CD4-positive, alpha-beta memory T cell (primary cell): ENCODE measurements at regions of chr14 and their contacts with region 1.

Region 1: DNA sequence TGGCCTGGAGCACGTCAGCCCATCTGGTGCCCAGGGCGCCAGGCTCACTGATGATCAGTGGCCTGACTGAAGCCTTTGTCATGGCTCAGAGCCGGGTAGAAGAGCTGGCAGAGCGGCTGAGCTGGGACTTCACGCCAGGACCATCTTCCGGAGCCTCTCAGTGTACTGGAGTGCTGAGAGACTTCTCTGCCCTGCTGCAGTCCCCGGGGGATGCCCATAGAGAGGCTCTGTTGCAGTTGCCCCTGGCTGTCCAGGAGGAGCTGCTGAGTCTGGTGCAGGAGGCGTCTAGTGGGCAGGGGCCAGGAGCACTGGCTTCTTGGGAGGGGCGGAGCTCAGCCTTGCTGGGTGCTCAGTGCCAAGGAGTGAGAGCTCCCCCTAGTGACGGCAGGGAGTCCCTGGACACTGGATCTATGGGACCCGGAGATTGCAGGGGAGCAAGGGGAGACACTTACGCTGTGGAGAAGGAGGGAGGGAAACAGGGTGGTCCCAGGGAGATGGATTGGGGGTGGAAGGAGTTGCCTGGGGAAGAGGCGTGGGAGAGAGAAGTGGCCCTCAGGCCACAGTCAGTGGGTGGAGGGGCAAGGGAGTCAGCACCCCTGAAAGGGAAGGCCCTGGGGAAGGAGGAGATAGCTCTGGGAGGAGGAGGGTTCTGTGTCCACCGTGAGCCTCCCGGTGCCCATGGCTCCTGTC is 2.0 kb downstream of the KHNYN start:
- DNase-seq: peak; percentile 85 to 87 (median 85)
- H3K4me3 ChIP-seq: peak overlapping the region in 1 of 2 donors; percentile 87
- H3K4me3 Mint-ChIP-seq: peak overlapping the region; percentile 90 to 95 (median 92)
- H3K27ac ChIP-seq: peak overlapping the region; percentile 93
- H3K27ac Mint-ChIP-seq: peak overlapping the region; percentile 84 to 98 (median 96)
- H3K4me1 ChIP-seq: peaks cover 61% of the 10 kb centered on the region
- H3K4me1 Mint-ChIP-seq: peaks cover 27 to 66% (median 45%) of the 10 kb centered on the region in 4 donors
- H3K27me3 ChIP-seq: no peaks in the 10 kb centered on the region
- H3K27me3 Mint-ChIP-seq: no peaks in the 10 kb centered on the region

Region 2: GRCh38 chr14:23567192-23568020 is 864.3 kb before region 1 on chr14 and contains the start of gene AP1G2:
- CTCF ChIA-PET with region 1: no interaction called
- POLR2A ChIA-PET with region 1: no interaction called
- intact Hi-C with region 1: loop called (anchors 5 kb)
- DNase-seq: peak; percentile 85 to 88 (median 86)
- H3K4me3 ChIP-seq: peak within 1 kb of the TSS; percentile 79 to 94
- H3K4me3 Mint-ChIP-seq: peak within 1 kb of the TSS; percentile 97 to 100 (median 100)
- H3K27ac ChIP-seq: peak within 1 kb of the TSS; percentile 74
- H3K27ac Mint-ChIP-seq: peak within 1 kb of the TSS; percentile 95 to 100 (median 98)
- H3K4me1 ChIP-seq: peaks cover 22% of the 10 kb centered on the region
- H3K4me1 Mint-ChIP-seq: peaks cover 22 to 55% (median 37%) of the 10 kb centered on the region in 4 donors
- H3K27me3 ChIP-seq: no peaks in the 10 kb centered on the region
- H3K27me3 Mint-ChIP-seq: peaks cover 1 to 2% of the 10 kb centered on the region in 2 donors
- total RNA-seq, gene AP1G2: 492 to 498 TPM

Region 3: DNA sequence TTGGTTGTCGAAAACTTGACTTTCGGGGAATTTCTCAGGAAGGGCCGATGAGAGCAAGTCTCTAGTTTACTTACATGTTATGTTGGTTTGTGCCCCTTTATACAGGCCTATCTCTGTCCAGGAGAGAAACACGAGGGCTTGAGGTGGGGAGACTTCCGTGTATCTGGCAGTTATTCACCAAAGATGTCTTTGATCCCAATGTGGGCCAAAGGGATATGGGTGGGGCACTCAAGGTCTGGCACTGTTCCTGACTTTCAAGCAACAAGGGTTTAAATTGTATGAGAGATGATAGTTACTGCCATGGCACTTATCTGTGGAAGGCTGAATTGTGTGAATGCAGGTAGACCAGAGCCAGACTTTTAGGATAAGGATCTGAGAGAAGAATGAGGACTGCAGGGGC is 615.3 kb before region 1 on chr14:
- CTCF ChIA-PET with region 1: no interaction called
- POLR2A ChIA-PET with region 1: no interaction called
- intact Hi-C with region 1: no loop called
- DNase-seq: no peak
- H3K4me3 ChIP-seq: no peak overlapping the region
- H3K4me3 Mint-ChIP-seq: no peak overlapping the region
- H3K27ac ChIP-seq: no peak overlapping the region
- H3K27ac Mint-ChIP-seq: no peak overlapping the region
- H3K4me1 ChIP-seq: no peaks in the 10 kb centered on the region
- H3K4me1 Mint-ChIP-seq: no peaks in the 10 kb centered on the region
- H3K27me3 ChIP-seq: no peaks in the 10 kb centered on the region
- H3K27me3 Mint-ChIP-seq: peaks cover 0 to 2% of the 10 kb centered on the region in 2 donors

Region 4: GRCh38 chr14:24080888-24081738 is 350.6 kb before region 1 on chr14:
- CTCF ChIA-PET with region 1: no interaction called
- POLR2A ChIA-PET with region 1: interaction called, 4 read pairs
- intact Hi-C with region 1: loop called (anchors 1 kb)
- DNase-seq: peak; percentile 64 to 77 (median 67)
- H3K4me3 ChIP-seq: peak overlapping the region; percentile 39 to 60
- H3K4me3 Mint-ChIP-seq: peak overlapping the region; percentile 81 to 90 (median 87)
- H3K27ac ChIP-seq: peak overlapping the region; percentile 50
- H3K27ac Mint-ChIP-seq: peak overlapping the region; percentile 64 to 92 (median 88)
- H3K4me1 ChIP-seq: peaks cover 14% of the 10 kb centered on the region
- H3K4me1 Mint-ChIP-seq: peaks cover 10 to 27% (median 15%) of the 10 kb centered on the region in 4 donors
- H3K27me3 ChIP-seq: no peaks in the 10 kb centered on the region
- H3K27me3 Mint-ChIP-seq: no peaks in the 10 kb centered on the region

Region 5: GRCh38 chr14:24195191-24196070 is 236.3 kb before region 1 on chr14 and contains the start of gene TM9SF1:
- CTCF ChIA-PET with region 1: no interaction called
- POLR2A ChIA-PET with region 1: interaction called, 19 read pairs
- intact Hi-C with region 1: no loop called
- DNase-seq: peak; percentile 89 to 92 (median 92)
- H3K4me3 ChIP-seq: peak within 1 kb of the TSS; percentile 87 to 90
- H3K4me3 Mint-ChIP-seq: peak within 1 kb of the TSS; percentile 93 to 98 (median 94)
- H3K27ac ChIP-seq: peak within 1 kb of the TSS; percentile 98
- H3K27ac Mint-ChIP-seq: peak within 1 kb of the TSS; percentile 92 to 99 (median 98)
- H3K4me1 ChIP-seq: peaks cover 37% of the 10 kb centered on the region
- H3K4me1 Mint-ChIP-seq: peaks cover 31 to 65% (median 48%) of the 10 kb centered on the region in 4 donors
- H3K27me3 ChIP-seq: no peaks in the 10 kb centered on the region
- H3K27me3 Mint-ChIP-seq: no peaks in the 10 kb centered on the region
- total RNA-seq, gene TM9SF1: 24.1 to 26.3 TPM

Region 6: DNA sequence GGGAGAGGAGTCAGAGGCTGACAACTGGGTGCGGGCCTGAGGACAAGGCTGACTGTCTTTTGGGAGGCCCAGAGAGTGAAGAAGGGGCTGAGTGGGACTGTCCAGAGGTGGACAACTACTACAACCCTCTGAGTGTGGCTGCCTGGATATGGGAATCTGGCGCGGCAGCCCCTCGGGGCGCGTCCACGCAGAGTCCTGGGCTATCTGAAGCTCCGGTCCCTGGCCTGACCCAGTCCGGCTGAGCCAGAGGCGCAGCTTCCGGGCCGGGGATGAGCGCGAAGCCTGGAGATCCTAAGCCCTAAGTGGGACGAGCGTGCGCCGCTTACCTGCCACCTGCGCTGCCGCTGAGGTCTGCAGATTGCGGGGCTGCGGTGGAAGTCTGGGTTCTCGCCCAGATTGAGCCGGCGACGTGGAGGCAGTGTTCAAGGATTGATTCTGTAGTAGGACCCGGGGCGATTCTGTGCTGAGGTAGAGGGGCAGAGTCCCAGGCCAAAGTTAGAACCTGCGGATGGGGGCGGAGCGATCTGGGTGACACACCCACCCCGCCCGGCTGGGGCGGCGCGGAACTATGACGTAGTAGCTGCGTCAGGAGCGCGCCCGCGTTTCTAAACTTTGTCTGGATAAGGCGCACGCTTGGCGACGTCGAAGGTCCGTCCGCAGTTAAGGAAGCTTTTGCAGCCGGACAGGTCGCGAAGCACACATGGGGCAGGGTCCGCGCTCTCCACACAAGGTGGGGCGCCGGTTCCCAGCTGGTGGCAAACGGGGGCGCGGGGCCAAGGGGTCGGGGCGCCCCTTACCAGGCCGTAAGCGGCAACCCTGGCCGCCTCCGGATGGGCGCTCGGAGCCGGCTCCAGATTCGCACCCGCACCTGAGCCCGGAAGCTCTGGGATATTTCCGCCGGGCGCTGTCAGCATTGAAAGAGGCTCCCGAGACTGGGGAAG is 132.2 kb before region 1 on chr14 and contains the starts of genes DHRS1 and NOP9:
- CTCF ChIA-PET with region 1: interaction called, 29 read pairs
- POLR2A ChIA-PET with region 1: interaction called, 37 read pairs
- intact Hi-C with region 1: no loop called
- DNase-seq: peak; percentile 89 to 92 (median 90)
- H3K4me3 ChIP-seq: peak within 1 kb of the TSS; percentile 77 to 85
- H3K4me3 Mint-ChIP-seq: peak within 1 kb of the TSS; percentile 91 to 99 (median 94)
- H3K27ac ChIP-seq: peak within 1 kb of the TSS; percentile 87
- H3K27ac Mint-ChIP-seq: peak within 1 kb of the TSS; percentile 96 to 99 (median 98)
- H3K4me1 ChIP-seq: peaks cover 42% of the 10 kb centered on the region
- H3K4me1 Mint-ChIP-seq: peaks cover 32 to 66% (median 51%) of the 10 kb centered on the region in 4 donors
- H3K27me3 ChIP-seq: no peaks in the 10 kb centered on the region
- H3K27me3 Mint-ChIP-seq: no peaks in the 10 kb centered on the region
- total RNA-seq, gene DHRS1: 37.6 to 38.6 TPM
- total RNA-seq, gene NOP9: 23.1 to 28.1 TPM

Region 7: DNA sequence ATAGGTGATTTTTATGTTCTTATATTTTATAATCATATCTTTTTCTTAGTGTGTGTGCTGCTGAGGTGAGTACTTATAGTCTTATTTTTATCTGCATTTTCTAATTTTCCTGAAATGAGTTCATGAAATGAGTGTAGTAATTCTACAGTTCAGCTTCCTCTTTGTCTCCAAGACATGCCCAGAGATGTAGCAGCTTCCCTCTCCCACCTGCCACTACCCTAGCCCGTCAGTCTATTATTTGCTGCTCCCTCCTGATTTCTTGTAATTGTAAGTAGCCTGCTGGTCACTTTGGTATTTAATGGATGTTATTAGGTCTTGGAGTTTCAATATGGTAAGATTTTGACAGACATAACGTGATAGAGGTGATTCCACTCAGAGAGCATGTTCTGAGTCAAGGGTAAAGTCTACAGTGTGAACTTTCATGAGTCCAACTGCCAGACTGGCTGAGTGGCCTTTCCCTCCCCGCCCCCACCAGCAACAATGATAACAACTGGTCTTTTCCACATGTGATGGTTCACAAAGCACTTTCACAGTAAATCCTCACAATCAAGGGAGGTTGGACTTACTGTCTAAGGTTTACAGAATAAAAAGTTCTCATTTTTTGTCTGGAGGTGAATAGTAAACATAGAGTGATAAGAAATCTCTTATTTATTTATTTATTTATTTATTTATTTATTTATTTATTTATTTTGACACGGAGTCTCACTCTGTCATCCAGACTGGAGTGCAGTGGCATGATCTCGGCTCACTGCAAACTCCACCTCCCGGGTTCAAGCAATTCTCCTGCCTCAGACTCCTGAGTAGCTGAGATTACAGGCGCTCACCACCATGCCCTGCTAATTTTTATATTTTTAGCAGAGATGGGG is 87.7 kb before region 1 on chr14:
- CTCF ChIA-PET with region 1: interaction called, 791 read pairs
- POLR2A ChIA-PET with region 1: interaction called, 361 read pairs
- intact Hi-C with region 1: no loop called
- DNase-seq: no peak
- H3K4me3 ChIP-seq: no peak overlapping the region
- H3K4me3 Mint-ChIP-seq: no peak overlapping the region
- H3K27ac ChIP-seq: no peak overlapping the region
- H3K27ac Mint-ChIP-seq: no peak overlapping the region
- H3K4me1 ChIP-seq: peaks cover 10% of the 10 kb centered on the region
- H3K4me1 Mint-ChIP-seq: peaks cover 7 to 16% (median 10%) of the 10 kb centered on the region in 4 donors
- H3K27me3 ChIP-seq: no peaks in the 10 kb centered on the region
- H3K27me3 Mint-ChIP-seq: peaks cover 12 to 23% of the 10 kb centered on the region in 2 donors

Region 8: GRCh38 chr14:24389201-24389848 is 42.4 kb before region 1 on chr14:
- CTCF ChIA-PET with region 1: no interaction called
- POLR2A ChIA-PET with region 1: no interaction called
- intact Hi-C with region 1: no loop called
- DNase-seq: no peak
- H3K4me3 ChIP-seq: no peak overlapping the region
- H3K4me3 Mint-ChIP-seq: no peak overlapping the region
- H3K27ac ChIP-seq: no peak overlapping the region
- H3K27ac Mint-ChIP-seq: no peak overlapping the region
- H3K4me1 ChIP-seq: no peaks in the 10 kb centered on the region
- H3K4me1 Mint-ChIP-seq: no peaks in the 10 kb centered on the region
- H3K27me3 ChIP-seq: peaks cover 5% of the 10 kb centered on the region
- H3K27me3 Mint-ChIP-seq: peaks cover 20 to 33% of the 10 kb centered on the region in 2 donors

Region 9: DNA sequence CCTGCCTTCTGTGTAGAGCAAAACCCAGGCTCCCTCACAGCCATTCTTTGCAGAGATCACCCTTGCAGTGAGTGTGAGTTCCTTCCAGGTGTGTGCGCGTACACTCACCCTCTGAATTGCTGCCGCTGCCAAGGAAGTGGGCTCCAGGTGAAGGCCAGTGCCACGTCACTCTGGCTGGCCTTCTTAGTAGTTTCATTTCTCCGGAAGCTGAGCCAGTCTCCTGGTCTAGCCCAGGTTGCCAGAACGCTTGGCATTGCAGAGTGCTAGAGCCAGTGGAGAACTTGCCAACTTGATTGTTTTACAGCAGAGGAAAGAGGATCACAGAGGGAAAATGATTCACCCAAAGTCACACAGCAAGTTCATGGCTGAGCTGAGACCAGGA is 13.2 kb before region 1 on chr14:
- CTCF ChIA-PET with region 1: interaction called, 42 read pairs
- POLR2A ChIA-PET with region 1: interaction called, 215 read pairs
- intact Hi-C with region 1: no loop called
- DNase-seq: no peak
- H3K4me3 ChIP-seq: no peak overlapping the region
- H3K4me3 Mint-ChIP-seq: no peak overlapping the region
- H3K27ac ChIP-seq: no peak overlapping the region
- H3K27ac Mint-ChIP-seq: peak overlapping the region in 1 of 7 donors; percentile 48
- H3K4me1 ChIP-seq: peaks cover 16% of the 10 kb centered on the region
- H3K4me1 Mint-ChIP-seq: no peaks in the 10 kb centered on the region
- H3K27me3 ChIP-seq: no peaks in the 10 kb centered on the region
- H3K27me3 Mint-ChIP-seq: no peaks in the 10 kb centered on the region